Upper lobe of right lung (tissue), 1 donor: ENCODE measurements at regions of chr1 and their contacts with region 1.

Region 1: GRCh38 chr1:983799-984473 is 2.0 kb upstream of the PERM1 start:
- DNase-seq: no peak
- ATAC-seq: peak; percentile 85
- H3K4me3 ChIP-seq: no peak overlapping the region
- H3K27ac ChIP-seq: no peak overlapping the region
- H3K4me1 ChIP-seq: no peaks in the 10 kb centered on the region
- H3K27me3 ChIP-seq: peaks cover 15% of the 10 kb centered on the region
- CTCF ChIP-seq: peak; percentile 97

Region 2: DNA sequence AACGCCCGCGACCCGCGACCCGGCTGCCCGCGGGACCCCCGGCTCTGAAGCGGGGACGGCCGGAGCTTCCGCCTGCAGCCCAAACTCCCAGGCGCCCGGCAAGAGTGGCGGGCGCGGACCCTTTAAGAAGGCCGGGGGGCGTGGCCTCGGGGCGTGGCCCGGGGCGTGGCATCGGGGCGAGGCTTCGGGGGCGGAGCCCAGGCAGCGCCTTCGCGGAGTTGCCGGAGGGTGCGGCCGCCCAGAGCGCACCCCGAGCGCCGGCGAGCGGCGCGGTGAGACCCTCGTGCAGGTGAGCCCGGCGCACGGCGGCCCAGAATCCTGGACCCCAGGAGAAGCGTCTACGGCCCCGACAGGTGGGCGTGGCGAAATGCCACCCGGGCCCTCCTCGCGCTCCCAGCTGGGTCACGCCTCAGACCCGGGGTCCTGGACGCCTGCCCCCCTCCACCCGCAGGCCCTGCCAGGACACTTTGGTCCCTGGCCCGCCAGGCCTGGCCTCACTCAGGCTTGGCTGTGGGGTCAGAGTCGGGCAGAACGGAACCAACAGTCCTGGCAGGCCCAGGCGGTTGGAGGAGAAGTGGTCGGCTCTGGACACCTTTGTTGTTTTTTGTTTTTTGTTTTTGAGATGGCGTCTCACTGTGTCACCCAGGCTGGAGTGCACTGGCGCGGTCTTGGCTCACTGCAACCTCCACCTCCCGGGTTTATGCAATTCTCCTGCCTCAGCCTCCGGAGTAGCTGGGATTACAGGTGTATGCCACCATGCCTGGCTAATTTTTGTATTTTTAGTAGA is 75.8 kb after region 1 on chr1:
- intact Hi-C with region 1: loop called (anchors 10 kb)
- DNase-seq: peak; percentile 94
- ATAC-seq: peak; percentile 90
- H3K4me3 ChIP-seq: peak overlapping the region; percentile 52
- H3K27ac ChIP-seq: no peak overlapping the region
- H3K4me1 ChIP-seq: peaks cover 23% of the 10 kb centered on the region
- H3K27me3 ChIP-seq: peaks cover 43% of the 10 kb centered on the region
- CTCF ChIP-seq: no peak